BJ (cell line): ENCODE measurements at regions of chr11 and their contacts with region 1.

Region 1: DNA sequence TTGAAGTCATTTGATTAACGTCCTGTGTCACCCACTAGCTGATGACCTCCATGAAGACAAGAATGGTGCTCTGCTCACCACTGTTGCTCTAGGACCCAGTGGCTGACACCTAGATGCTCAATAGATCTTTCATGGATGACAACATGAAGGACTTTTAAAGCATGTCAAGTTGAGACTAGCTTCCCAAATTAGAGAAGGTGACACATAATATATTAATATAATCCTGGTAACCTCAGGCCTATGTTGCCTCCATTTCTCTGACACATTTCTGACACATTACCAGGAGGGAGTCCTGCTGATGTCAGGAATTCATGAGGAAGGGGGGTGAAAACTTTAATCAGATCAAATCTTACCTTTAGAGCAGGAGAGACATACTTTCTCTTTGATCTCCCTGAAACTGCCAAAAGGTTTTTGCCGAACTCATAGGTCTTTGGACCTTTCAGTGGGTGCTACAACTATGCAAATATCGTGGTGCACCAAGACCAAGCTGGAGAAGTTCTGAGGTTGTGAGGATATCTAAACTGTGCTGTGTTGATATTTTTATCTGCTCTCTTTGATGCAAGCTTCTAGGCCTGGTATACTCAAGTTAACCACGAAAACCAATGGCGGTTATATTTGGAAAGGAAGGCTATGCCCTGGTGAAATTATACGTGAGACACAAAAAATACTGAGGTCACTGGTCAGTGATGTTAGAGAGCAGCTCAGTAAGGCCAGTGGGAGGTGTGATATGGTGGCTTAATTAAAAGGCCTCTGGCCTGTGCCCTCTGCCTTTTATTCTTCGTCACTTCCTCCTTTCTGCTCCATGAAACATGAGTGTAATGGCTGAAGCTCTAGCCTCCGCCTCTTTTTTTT is 13.2 kb upstream of the AMPD3 start:
- DNase-seq: no peak
- H3K4me3 ChIP-seq: no peak overlapping the region
- H3K27me3 ChIP-seq: no peaks in the 10 kb centered on the region
- CTCF ChIP-seq: no peak

Region 2: DNA sequence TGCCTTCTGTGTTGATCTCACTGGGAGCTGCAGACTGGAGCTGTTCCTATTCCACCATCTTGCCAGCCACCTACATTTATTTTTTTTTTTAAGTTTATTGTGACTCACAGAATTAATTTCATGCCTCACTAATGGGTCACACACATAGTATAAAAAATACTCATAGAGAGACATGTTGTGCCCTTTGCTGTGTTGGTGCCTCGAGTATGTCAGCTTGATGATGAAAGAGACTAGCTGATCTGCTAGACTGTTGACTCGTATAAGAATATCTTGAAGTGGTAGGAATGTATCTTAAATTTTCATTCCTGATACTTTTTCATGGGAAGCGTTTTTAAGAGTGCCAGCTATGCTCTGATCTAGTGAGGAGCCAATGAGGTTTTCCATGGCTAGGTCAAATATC is 15.4 kb before region 1 on chr11:
- CTCF ChIA-PET with region 1: interaction called, 21 read pairs
- POLR2A ChIA-PET with region 1: no interaction called
- DNase-seq: no peak
- H3K4me3 ChIP-seq: no peak overlapping the region
- H3K27me3 ChIP-seq: no peaks in the 10 kb centered on the region
- CTCF ChIP-seq: no peak